CD4-positive, alpha-beta T cell (primary cell): ENCODE measurements at regions of chr2 and their contacts with region 1.

Region 1: GRCh38 chr2:109660046-109660860 is 46.1 kb downstream of the SOWAHC start:
- DNase-seq: no peak
- ATAC-seq: no peak
- H3K4me3 ChIP-seq: no peak overlapping the region
- H3K4me3 Mint-ChIP-seq: no peak overlapping the region
- H3K27ac ChIP-seq: no peak overlapping the region
- H3K27ac Mint-ChIP-seq: no peak overlapping the region
- H3K4me1 ChIP-seq: no peaks in the 10 kb centered on the region
- H3K4me1 Mint-ChIP-seq: no peaks in the 10 kb centered on the region
- H3K27me3 ChIP-seq: peaks cover 0 to 4% of the 10 kb centered on the region in 2 experiments
- H3K27me3 Mint-ChIP-seq: peaks cover 9% of the 10 kb centered on the region
- CTCF ChIP-seq: no peak

Region 2: GRCh38 chr2:109637749-109638570 is 22.3 kb before region 1 on chr2:
- CTCF ChIA-PET with region 1: no interaction called
- POLR2A ChIA-PET with region 1: no interaction called
- intact Hi-C with region 1: loop called in 1 of 2 experiments (anchors 2 kb)
- DNase-seq: peak in 3 of 14 experiments; percentile 12 to 39 (median 24)
- ATAC-seq: no peak
- H3K4me3 ChIP-seq: no peak overlapping the region
- H3K4me3 Mint-ChIP-seq: no peak overlapping the region
- H3K27ac ChIP-seq: no peak overlapping the region
- H3K27ac Mint-ChIP-seq: no peak overlapping the region
- H3K4me1 ChIP-seq: no peaks in the 10 kb centered on the region
- H3K4me1 Mint-ChIP-seq: peaks cover 5% of the 10 kb centered on the region
- H3K27me3 ChIP-seq: no peaks in the 10 kb centered on the region
- H3K27me3 Mint-ChIP-seq: peaks cover 4% of the 10 kb centered on the region
- CTCF ChIP-seq: no peak